Mammary epithelial cell (primary cell): ENCODE measurements at regions of chr4 and their contacts with region 1.

Region 1: DNA sequence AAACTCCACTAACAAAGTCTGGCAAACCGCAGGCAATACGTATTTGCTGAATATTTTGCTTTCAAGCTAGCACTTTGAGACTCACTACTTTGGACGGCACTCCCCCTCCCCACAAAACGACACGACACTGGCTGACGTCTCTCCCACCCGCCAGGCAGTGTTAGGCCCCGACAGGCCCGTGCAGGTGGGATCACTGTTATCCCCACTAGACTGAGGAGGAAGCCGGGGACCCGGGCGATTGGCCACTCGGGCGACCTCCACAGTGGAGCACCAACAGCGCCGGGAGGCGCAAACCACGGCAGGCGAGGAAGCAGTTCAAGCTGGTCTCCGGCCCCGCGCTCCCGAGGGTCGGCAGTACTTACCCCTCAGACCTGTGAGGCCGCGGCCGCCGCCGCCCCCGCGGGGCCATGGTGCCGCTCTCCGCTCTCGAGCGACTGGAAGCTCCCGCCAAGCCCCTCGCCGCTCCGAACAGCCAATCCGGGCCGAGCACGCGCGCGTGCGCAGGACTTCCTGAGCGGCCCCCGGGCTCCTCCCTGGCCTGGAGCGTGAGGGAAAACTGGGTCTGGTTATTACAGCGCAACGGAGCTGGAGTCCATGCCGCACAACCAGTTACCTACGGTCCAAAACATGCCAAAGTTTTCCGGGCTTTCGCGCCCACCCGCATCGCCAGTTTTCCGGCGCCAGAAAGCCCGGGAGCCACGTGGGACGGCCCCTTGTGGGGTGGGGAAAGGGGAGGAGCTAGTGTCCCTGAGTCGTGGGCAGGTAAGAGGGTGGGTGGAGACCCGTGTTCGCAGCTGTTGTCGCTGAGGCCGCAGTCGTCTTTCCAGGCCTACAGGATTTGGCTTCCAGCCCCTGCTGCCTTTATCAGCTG is at the start of gene CENPU:
- DNase-seq: peak; percentile 98
- H3K4me3 ChIP-seq: peak within 1 kb of the TSS; percentile 57 to 98 (median 94)
- H3K27ac ChIP-seq: peak within 1 kb of the TSS; percentile 96
- H3K4me1 ChIP-seq: peaks cover 31% of the 10 kb centered on the region
- H3K27me3 ChIP-seq: no peaks in the 10 kb centered on the region
- CTCF ChIP-seq: no peak
- total RNA-seq, gene CENPU: 4.5 to 38.3 TPM

Region 2: GRCh38 chr4:184263910-184264732 is 469.8 kb before region 1 on chr4:
- CTCF ChIA-PET with region 1: no interaction called
- dilution Hi-C with region 1: no loop called
- in situ Hi-C with region 1: no loop called
- intact Hi-C with region 1: loop called (anchors 5 kb)
- DNase-seq: peak; percentile 79
- H3K4me3 ChIP-seq: no peak overlapping the region
- H3K27ac ChIP-seq: no peak overlapping the region
- H3K4me1 ChIP-seq: peaks cover 26% of the 10 kb centered on the region
- H3K27me3 ChIP-seq: peaks cover under 1% of the 10 kb centered on the region
- CTCF ChIP-seq: peak; percentile 79 to 80

Region 3: GRCh38 chr4:184688447-184688846 is 45.4 kb before region 1 on chr4:
- CTCF ChIA-PET with region 1: no interaction called
- dilution Hi-C with region 1: no loop called
- in situ Hi-C with region 1: no loop called
- intact Hi-C with region 1: loop called (anchors 2 kb)
- DNase-seq: peak; percentile 92
- H3K4me3 ChIP-seq: no peak overlapping the region
- H3K27ac ChIP-seq: peak overlapping the region; percentile 69
- H3K4me1 ChIP-seq: peaks cover 23% of the 10 kb centered on the region
- H3K27me3 ChIP-seq: no peaks in the 10 kb centered on the region
- CTCF ChIP-seq: no peak

Region 4: GRCh38 chr4:184792950-184793555 is 59.2 kb after region 1 on chr4:
- CTCF ChIA-PET with region 1: interaction called, 35 read pairs
- dilution Hi-C with region 1: no loop called
- in situ Hi-C with region 1: no loop called
- intact Hi-C with region 1: no loop called
- DNase-seq: peak; percentile 96
- H3K4me3 ChIP-seq: no peak overlapping the region
- H3K27ac ChIP-seq: peak overlapping the region; percentile 14
- H3K4me1 ChIP-seq: peaks cover 15% of the 10 kb centered on the region
- H3K27me3 ChIP-seq: no peaks in the 10 kb centered on the region
- CTCF ChIP-seq: no peak

Region 5: GRCh38 chr4:184803133-184803532 is 69.2 kb after region 1 on chr4:
- CTCF ChIA-PET with region 1: no interaction called
- dilution Hi-C with region 1: no loop called
- in situ Hi-C with region 1: no loop called
- intact Hi-C with region 1: no loop called
- DNase-seq: no peak
- H3K4me3 ChIP-seq: no peak overlapping the region
- H3K27ac ChIP-seq: no peak overlapping the region
- H3K4me1 ChIP-seq: peaks cover 37% of the 10 kb centered on the region
- H3K27me3 ChIP-seq: no peaks in the 10 kb centered on the region
- CTCF ChIP-seq: no peak

Region 6: GRCh38 chr4:184911310-184911709 is 177.4 kb after region 1 on chr4:
- CTCF ChIA-PET with region 1: no interaction called
- dilution Hi-C with region 1: no loop called
- in situ Hi-C with region 1: no loop called
- intact Hi-C with region 1: no loop called
- DNase-seq: peak; percentile 97
- H3K4me3 ChIP-seq: no peak overlapping the region
- H3K27ac ChIP-seq: peak overlapping the region; percentile 25
- H3K4me1 ChIP-seq: peaks cover 21% of the 10 kb centered on the region
- H3K27me3 ChIP-seq: no peaks in the 10 kb centered on the region
- CTCF ChIP-seq: no peak